ENCODE measurements at regions of chr6 and their contacts with region 1.

Region 1: DNA sequence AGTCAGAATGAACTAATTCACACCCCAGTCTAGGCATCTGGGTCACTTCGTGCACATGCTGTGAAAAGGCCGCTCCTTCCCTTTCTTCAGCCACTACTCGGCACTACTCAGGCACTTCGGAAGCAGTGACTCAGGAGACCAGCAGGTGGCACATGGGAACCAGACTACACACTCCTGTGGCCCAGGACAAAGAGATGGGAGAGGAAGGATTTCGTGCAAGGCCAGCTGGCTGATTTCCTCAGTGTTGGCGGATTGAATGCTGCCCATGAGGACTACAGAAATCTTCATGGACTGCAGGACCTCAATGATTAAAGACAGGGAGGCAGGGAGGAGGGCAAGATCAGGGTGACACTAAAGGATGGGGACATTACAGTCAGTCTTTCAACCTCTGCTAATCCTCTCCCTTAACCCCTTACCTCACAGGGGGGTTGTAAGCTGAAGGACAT is 117.8 kb upstream of the SPACA1 start:
- DNase-seq: peak; percentile 49
- ATAC-seq: peak; percentile 77
- H3K4me3 Mint-ChIP-seq: no peak overlapping the region
- H3K27ac Mint-ChIP-seq: no peak overlapping the region
- H3K4me1 Mint-ChIP-seq: peaks cover 30% of the 10 kb centered on the region
- H3K27me3 Mint-ChIP-seq: no peaks in the 10 kb centered on the region
- CTCF ChIP-seq: peak; percentile 32

Region 2: DNA sequence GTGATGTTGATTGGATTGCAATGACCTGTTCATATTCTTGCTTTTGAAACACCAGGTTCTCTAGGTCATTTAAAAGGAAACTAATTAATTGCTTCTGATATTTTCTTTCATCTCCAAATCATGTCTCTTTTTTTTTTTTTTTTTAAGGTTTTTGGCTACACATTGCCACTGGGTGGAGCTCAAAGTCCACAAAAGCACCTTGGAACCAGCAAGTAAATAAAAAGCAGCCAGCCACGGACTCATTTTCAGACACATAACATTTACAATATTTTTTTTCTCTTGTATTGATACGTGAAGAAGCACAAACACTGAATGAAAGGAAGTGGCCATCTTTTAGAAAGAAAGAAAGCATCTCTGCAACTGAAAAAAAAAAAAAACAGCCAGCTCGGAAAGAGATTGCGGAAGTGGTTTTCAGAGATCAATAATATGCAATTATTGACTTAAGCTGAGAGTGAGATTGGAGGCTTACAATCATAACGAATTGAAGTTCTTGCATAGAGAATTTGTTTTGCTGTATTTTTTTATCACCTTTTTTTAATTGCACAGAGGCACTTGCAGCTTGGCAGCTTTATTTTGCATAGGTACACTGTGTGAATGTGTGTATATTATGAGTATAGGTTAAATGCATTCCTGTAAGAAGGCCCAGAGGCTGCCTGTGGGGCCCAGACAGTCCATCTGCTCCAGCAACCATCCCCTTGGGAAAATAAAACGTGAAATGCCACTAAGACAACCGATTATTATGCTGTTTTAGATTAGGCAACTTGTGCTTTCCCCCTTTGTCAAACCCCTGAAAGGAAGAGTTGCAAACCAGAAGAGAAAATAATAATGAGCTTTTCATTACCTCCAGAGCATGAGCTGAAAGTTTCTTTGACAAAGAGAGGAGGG is 863.2 kb before region 1 on chr6:
- CTCF ChIA-PET with region 1: no interaction called
- POLR2A ChIA-PET with region 1: no interaction called
- intact Hi-C with region 1: loop called (anchors 5 kb)
- DNase-seq: no peak
- ATAC-seq: peak; percentile 25
- H3K4me3 Mint-ChIP-seq: peak overlapping the region; percentile 54
- H3K27ac Mint-ChIP-seq: no peak overlapping the region
- H3K4me1 Mint-ChIP-seq: peaks cover 5% of the 10 kb centered on the region
- H3K27me3 Mint-ChIP-seq: no peaks in the 10 kb centered on the region
- CTCF ChIP-seq: no peak

Region 3: GRCh38 chr6:87407901-87408720 is 521.8 kb before region 1 on chr6 and contains the start of gene CFAP206:
- CTCF ChIA-PET with region 1: no interaction called
- POLR2A ChIA-PET with region 1: no interaction called
- intact Hi-C with region 1: loop called (anchors 5 kb)
- DNase-seq: peak; percentile 80
- ATAC-seq: peak; percentile 80
- H3K4me3 Mint-ChIP-seq: peak within 1 kb of the TSS; percentile 87
- H3K27ac Mint-ChIP-seq: peak within 1 kb of the TSS; percentile 79
- H3K4me1 Mint-ChIP-seq: peaks cover 9% of the 10 kb centered on the region
- H3K27me3 Mint-ChIP-seq: peaks cover 8% of the 10 kb centered on the region
- CTCF ChIP-seq: no peak
- total RNA-seq, gene CFAP206: 0.09 TPM in 1 of 2 replicates, not detected in the other

Region 4: DNA sequence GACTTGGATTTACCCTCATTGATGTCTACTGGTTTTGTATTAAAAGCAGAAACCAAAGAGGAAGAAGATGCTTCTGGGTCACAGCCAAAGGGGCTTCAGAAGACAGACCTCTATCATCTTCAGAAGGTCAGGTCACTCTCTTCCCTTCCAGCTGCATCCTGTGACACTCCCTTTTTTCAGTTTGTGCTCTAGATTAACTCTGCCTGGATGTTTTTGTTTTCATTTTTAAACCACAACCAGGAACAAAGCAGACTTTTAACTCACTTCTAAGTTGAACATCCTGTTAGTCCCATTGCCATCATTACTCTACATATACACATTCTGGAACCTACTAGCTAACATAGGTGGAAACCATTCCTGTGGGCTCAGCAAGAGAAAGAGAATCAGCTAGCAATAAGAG is 273.0 kb before region 1 on chr6:
- CTCF ChIA-PET with region 1: no interaction called
- POLR2A ChIA-PET with region 1: no interaction called
- intact Hi-C with region 1: no loop called
- DNase-seq: no peak
- ATAC-seq: no peak
- H3K4me3 Mint-ChIP-seq: no peak overlapping the region
- H3K27ac Mint-ChIP-seq: no peak overlapping the region
- H3K4me1 Mint-ChIP-seq: peaks cover 13% of the 10 kb centered on the region
- H3K27me3 Mint-ChIP-seq: no peaks in the 10 kb centered on the region
- CTCF ChIP-seq: no peak

Region 5: DNA sequence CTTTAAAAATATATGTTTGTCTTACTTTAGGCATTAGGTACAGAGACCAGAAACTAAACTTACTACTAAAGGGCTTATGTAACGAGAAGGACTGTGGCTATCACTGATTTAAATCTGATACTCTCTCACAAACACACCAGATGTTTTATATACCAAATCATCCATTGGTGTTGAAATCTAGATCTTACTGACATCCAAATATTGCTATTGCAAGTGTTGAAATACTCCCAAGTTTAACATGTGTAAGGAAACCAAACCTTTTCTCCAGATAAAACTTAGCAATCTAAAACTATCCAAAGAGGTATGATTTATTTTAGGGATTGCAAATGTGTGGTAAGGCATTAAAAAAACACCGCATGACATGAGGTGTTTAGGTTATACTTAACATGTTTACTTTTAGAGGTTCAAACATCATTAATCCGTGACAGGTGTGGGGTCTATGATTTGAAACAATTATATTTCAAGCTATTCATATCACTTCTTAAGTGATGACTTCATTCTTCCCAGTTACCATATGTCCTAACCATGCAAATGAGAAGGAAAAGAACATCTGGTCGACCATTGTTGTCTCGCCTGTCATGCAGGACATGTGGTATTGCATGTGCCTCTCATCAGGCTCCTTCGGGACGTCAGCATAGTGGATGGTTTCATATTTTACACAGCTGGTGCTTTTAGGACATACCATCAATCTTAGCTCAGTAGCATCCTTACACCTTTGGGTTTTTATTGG is 50.6 kb before region 1 on chr6:
- CTCF ChIA-PET with region 1: no interaction called
- POLR2A ChIA-PET with region 1: no interaction called
- intact Hi-C with region 1: no loop called
- DNase-seq: no peak
- ATAC-seq: no peak
- H3K4me3 Mint-ChIP-seq: no peak overlapping the region
- H3K27ac Mint-ChIP-seq: no peak overlapping the region
- H3K4me1 Mint-ChIP-seq: peaks cover 7% of the 10 kb centered on the region
- H3K27me3 Mint-ChIP-seq: peaks cover 9% of the 10 kb centered on the region
- CTCF ChIP-seq: no peak

Region 6: GRCh38 chr6:88089708-88090107 is 159.8 kb after region 1 on chr6:
- CTCF ChIA-PET with region 1: no interaction called
- POLR2A ChIA-PET with region 1: no interaction called
- intact Hi-C with region 1: no loop called
- DNase-seq: no peak
- ATAC-seq: no peak
- H3K4me3 Mint-ChIP-seq: no peak overlapping the region
- H3K27ac Mint-ChIP-seq: no peak overlapping the region
- H3K4me1 Mint-ChIP-seq: no peaks in the 10 kb centered on the region
- H3K27me3 Mint-ChIP-seq: peaks cover 3% of the 10 kb centered on the region
- CTCF ChIP-seq: no peak

Region 7: DNA sequence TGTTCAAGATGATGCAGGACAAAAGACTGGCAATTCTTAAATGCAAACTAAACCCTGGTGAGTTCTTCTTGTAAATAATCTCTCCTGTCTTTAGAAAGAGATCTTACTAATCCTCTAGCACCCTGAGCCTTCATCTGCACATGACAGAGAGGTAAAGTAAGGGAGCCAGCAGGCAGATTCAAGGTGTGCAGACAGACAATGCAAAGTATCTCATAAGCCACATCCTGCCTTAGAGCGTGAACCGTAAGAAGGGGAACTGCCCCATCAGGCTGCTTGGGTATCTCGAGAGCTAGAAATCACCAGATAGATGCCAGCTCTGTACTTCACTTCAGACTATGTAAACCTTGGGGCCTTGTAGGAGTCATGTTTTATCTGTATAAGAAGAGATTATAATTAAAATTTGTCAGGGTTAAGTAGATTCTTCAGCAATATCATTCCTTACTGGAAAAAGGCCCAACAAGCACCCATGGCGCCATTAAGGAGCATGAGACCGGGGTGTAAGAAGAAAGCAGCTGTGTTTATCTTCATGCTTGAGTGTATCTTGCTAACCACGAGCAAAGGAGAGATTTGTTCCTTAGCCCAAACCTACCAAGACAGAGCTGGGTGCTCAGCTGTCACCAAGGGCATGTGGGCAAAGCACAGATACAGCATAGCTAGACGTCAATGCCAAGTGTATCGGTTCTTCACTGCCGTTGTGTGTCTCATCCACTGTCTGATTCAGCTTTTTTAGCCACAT is 211.9 kb after region 1 on chr6:
- CTCF ChIA-PET with region 1: interaction called, 5 read pairs
- POLR2A ChIA-PET with region 1: interaction called, 5 read pairs
- intact Hi-C with region 1: loop called (anchors 2 kb)
- DNase-seq: peak; percentile 33
- ATAC-seq: peak; percentile 91
- H3K4me3 Mint-ChIP-seq: peak overlapping the region; percentile 73
- H3K27ac Mint-ChIP-seq: peak overlapping the region; percentile 96
- H3K4me1 Mint-ChIP-seq: peaks cover 65% of the 10 kb centered on the region
- H3K27me3 Mint-ChIP-seq: no peaks in the 10 kb centered on the region
- CTCF ChIP-seq: no peak

Region 8: GRCh38 chr6:88238065-88238464 is 308.2 kb after region 1 on chr6:
- CTCF ChIA-PET with region 1: interaction called, 78 read pairs
- POLR2A ChIA-PET with region 1: interaction called, 6 read pairs
- intact Hi-C with region 1: loop called (anchors 1 kb)
- DNase-seq: no peak
- ATAC-seq: peak; percentile 82
- H3K4me3 Mint-ChIP-seq: no peak overlapping the region
- H3K27ac Mint-ChIP-seq: no peak overlapping the region
- H3K4me1 Mint-ChIP-seq: peaks cover 5% of the 10 kb centered on the region
- H3K27me3 Mint-ChIP-seq: no peaks in the 10 kb centered on the region
- CTCF ChIP-seq: no peak

Region 9: GRCh38 chr6:88761237-88762031 is 831.6 kb after region 1 on chr6:
- CTCF ChIA-PET with region 1: no interaction called
- POLR2A ChIA-PET with region 1: no interaction called
- intact Hi-C with region 1: loop called (anchors 5 kb)
- DNase-seq: no peak
- ATAC-seq: peak; percentile 84
- H3K4me3 Mint-ChIP-seq: peak overlapping the region; percentile 19
- H3K27ac Mint-ChIP-seq: peak overlapping the region; percentile 75
- H3K4me1 Mint-ChIP-seq: peaks cover 33% of the 10 kb centered on the region
- H3K27me3 Mint-ChIP-seq: no peaks in the 10 kb centered on the region
- CTCF ChIP-seq: no peak

Region 10: GRCh38 chr6:88870717-88871330 is 941.0 kb after region 1 on chr6:
- CTCF ChIA-PET with region 1: interaction called, 7 read pairs
- POLR2A ChIA-PET with region 1: no interaction called
- intact Hi-C with region 1: loop called (anchors 1 kb)
- DNase-seq: no peak
- ATAC-seq: peak; percentile 42
- H3K4me3 Mint-ChIP-seq: no peak overlapping the region
- H3K27ac Mint-ChIP-seq: no peak overlapping the region
- H3K4me1 Mint-ChIP-seq: peaks cover 10% of the 10 kb centered on the region
- H3K27me3 Mint-ChIP-seq: no peaks in the 10 kb centered on the region
- CTCF ChIP-seq: no peak